ENCODE measurements at regions of chr1 and their contacts with region 1.

Region 1: GRCh38 chr1:197156691-197157090 is 10.2 kb upstream of the ASPM start:
- DNase-seq: no peak
- ATAC-seq: no peak
- H3K4me3 ChIP-seq: no peak overlapping the region
- H3K4me3 Mint-ChIP-seq: no peak overlapping the region
- H3K27ac ChIP-seq: no peak overlapping the region
- H3K27ac Mint-ChIP-seq: no peak overlapping the region
- H3K4me1 ChIP-seq: no peaks in the 10 kb centered on the region
- H3K4me1 Mint-ChIP-seq: no peaks in the 10 kb centered on the region
- H3K27me3 ChIP-seq: no peaks in the 10 kb centered on the region
- H3K27me3 Mint-ChIP-seq: no peaks in the 10 kb centered on the region
- CTCF ChIP-seq: no peak

Region 2: DNA sequence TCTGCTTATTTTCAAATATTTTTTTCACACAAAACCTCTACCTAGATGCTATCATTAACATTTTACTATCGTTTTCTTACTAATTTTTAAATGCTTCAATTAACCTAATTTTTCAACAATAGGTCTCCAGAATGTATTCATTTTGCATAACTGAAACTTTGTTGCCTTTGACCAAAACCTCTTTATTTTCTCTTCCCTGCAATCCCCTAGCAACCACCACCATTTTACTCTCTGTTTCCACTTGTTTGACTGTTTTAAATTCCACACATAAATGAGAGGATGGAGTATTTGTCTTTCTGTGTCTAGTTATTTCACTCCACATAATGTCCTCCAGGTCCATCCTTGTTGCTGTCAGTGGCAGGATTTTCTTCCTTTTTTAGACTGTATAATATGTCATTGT is 80.1 kb before region 1 on chr1:
- CTCF ChIA-PET with region 1: no interaction called
- POLR2A ChIA-PET with region 1: no interaction called
- intact Hi-C with region 1: no loop called
- DNase-seq: no peak
- ATAC-seq: no peak
- H3K4me3 ChIP-seq: no peak overlapping the region
- H3K4me3 Mint-ChIP-seq: no peak overlapping the region
- H3K27ac ChIP-seq: no peak overlapping the region
- H3K27ac Mint-ChIP-seq: no peak overlapping the region
- H3K4me1 ChIP-seq: no peaks in the 10 kb centered on the region
- H3K4me1 Mint-ChIP-seq: no peaks in the 10 kb centered on the region
- H3K27me3 ChIP-seq: no peaks in the 10 kb centered on the region
- H3K27me3 Mint-ChIP-seq: no peaks in the 10 kb centered on the region
- CTCF ChIP-seq: no peak

Region 3: DNA sequence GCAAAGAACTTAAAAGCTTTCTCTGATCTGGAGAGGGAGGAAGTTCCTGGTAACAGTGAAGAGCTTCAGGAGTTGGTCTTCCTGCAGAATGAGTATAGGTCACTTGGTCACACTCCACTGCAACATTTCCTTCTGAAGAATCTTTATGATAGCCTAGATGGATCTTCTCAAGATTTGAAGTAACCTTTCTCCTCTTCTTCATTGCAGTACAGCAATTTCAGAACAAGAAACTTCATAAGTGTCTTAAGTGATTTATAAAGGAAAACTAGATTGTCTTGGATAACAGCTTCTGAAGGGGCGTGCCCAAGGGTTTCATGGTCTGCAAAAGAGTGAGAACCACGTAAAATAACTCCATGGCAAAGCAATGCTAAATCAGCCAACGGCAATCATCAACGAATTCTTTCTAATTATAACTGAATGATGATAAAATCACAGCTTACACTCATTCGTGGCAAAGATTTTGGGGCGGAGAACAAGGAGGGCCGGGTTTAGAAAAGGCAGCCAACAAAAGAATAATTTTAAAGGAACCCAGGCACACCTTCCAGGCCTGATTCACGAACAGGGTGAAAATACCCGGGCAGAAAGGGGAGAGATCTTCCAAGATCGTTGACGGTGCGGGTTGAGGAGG is 43.7 kb after region 1 on chr1:
- CTCF ChIA-PET with region 1: no interaction called
- POLR2A ChIA-PET with region 1: no interaction called
- intact Hi-C with region 1: loop called in 1 of 2 experiments (anchors 1 kb)
- DNase-seq: peak in 2 of 9 experiments; percentile 23 to 24
- ATAC-seq: peak; percentile 5
- H3K4me3 ChIP-seq: peak overlapping the region; percentile 81 to 83
- H3K4me3 Mint-ChIP-seq: peak overlapping the region; percentile 96
- H3K27ac ChIP-seq: peak overlapping the region; percentile 80
- H3K27ac Mint-ChIP-seq: peak overlapping the region; percentile 95
- H3K4me1 ChIP-seq: peaks cover 48% of the 10 kb centered on the region
- H3K4me1 Mint-ChIP-seq: peaks cover 76% of the 10 kb centered on the region
- H3K27me3 ChIP-seq: no peaks in the 10 kb centered on the region
- H3K27me3 Mint-ChIP-seq: no peaks in the 10 kb centered on the region
- CTCF ChIP-seq: no peak

Region 4: DNA sequence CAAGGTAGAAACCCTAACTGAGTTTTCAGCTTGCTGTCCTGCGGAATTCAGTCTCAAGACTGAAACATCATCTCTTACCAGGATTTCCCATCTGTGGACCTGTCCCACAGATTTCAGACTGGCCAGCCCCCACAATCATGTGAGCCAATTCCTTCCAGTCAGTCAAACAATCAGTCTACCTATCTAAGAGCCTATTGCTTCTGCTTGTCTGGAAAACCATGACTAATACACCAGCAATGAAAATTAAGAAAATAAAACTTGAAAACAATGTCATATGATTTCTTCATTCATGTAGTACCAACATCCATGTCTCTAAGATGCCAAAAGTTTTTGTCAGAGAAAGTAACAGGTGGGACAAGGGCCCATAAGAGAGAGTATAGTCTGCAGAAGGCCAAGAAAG is 53.7 kb after region 1 on chr1:
- CTCF ChIA-PET with region 1: no interaction called
- POLR2A ChIA-PET with region 1: no interaction called
- intact Hi-C with region 1: no loop called
- DNase-seq: no peak
- ATAC-seq: no peak
- H3K4me3 ChIP-seq: no peak overlapping the region
- H3K4me3 Mint-ChIP-seq: no peak overlapping the region
- H3K27ac ChIP-seq: no peak overlapping the region
- H3K27ac Mint-ChIP-seq: no peak overlapping the region
- H3K4me1 ChIP-seq: no peaks in the 10 kb centered on the region
- H3K4me1 Mint-ChIP-seq: no peaks in the 10 kb centered on the region
- H3K27me3 ChIP-seq: no peaks in the 10 kb centered on the region
- H3K27me3 Mint-ChIP-seq: no peaks in the 10 kb centered on the region
- CTCF ChIP-seq: no peak

Measured in CD8-positive, alpha-beta T cell (primary cell).